ENCODE measurements at regions of chr17 and their contacts with region 1.

Region 1: GRCh38 chr17:33750943-33751701 is 458.0 kb upstream of the ASIC2 start:
- DNase-seq: peak; percentile 65 to 82 (median 77)
- H3K4me3 ChIP-seq: peak overlapping the region in 4 of 7 experiments; percentile 16 to 57 (median 26)
- H3K27ac ChIP-seq: no peak overlapping the region
- H3K4me1 ChIP-seq: no peaks in the 10 kb centered on the region
- H3K27me3 ChIP-seq: peaks cover 5 to 26% (median 9%) of the 10 kb centered on the region in 5 experiments

Region 2: GRCh38 chr17:33725675-33726271 is 25.3 kb before region 1 on chr17:
- CTCF ChIA-PET with region 1: interaction called, 31 read pairs
- POLR2A ChIA-PET with region 1: no interaction called
- DNase-seq: peak; percentile 23 to 50 (median 39)
- H3K4me3 ChIP-seq: no peak overlapping the region
- H3K27ac ChIP-seq: no peak overlapping the region
- H3K4me1 ChIP-seq: no peaks in the 10 kb centered on the region
- H3K27me3 ChIP-seq: peaks cover 0 to 27% (median 3%) of the 10 kb centered on the region in 5 experiments

Region 3: DNA sequence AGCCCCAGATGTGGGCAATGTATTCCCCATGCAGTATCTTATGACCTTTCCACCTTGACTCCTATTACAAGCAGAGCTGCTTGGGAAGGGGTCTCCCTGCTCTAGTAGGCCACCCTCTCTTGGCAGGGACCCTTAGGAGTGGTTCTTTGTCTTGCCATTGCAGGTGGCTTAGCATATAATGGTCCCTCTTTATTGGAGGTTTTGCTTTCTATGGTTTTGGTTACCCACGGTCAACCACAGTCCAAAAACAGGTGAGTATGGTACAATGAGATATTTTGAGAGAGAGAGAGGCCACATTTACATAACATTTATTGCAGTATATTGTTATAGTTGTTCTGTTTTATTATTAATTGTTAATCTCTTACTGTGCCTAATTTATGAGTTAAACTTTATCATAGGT is 14.7 kb after region 1 on chr17:
- CTCF ChIA-PET with region 1: no interaction called
- POLR2A ChIA-PET with region 1: no interaction called
- DNase-seq: no peak
- H3K4me3 ChIP-seq: no peak overlapping the region
- H3K27ac ChIP-seq: no peak overlapping the region
- H3K4me1 ChIP-seq: no peaks in the 10 kb centered on the region
- H3K27me3 ChIP-seq: no peaks in the 10 kb centered on the region

Region 4: DNA sequence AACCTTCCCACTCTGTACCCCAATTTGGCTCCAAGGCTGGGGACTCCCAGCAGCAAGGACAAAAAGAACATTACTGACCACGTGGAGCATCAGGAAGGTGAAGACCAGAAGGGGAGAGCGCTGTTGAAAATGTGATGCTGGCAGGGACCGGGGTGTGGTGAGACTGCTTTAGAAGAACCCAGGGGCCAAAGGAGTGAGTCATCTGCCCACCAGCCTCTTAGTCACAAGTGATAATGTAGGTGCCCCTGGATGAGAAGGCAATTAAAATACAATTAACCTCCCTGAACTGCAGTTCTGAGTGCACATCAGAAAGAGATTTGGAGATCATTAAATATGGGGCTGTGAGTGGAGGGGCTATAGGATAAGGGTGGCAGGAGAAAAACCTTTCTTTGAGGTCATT is 137.3 kb after region 1 on chr17:
- CTCF ChIA-PET with region 1: no interaction called
- POLR2A ChIA-PET with region 1: no interaction called
- DNase-seq: peak in 2 of 3 donors; percentile 38 to 61
- H3K4me3 ChIP-seq: no peak overlapping the region
- H3K27ac ChIP-seq: peak overlapping the region in 1 of 2 experiments; percentile 18
- H3K4me1 ChIP-seq: peaks cover 0 to 4% (median 0%) of the 10 kb centered on the region in 4 experiments
- H3K27me3 ChIP-seq: peaks cover 0 to 8% (median 0%) of the 10 kb centered on the region in 5 experiments

Region 5: GRCh38 chr17:33944412-33944811 is 193.3 kb after region 1 on chr17:
- CTCF ChIA-PET with region 1: no interaction called
- POLR2A ChIA-PET with region 1: interaction called, 10 read pairs
- DNase-seq: no peak
- H3K4me3 ChIP-seq: no peak overlapping the region
- H3K27ac ChIP-seq: no peak overlapping the region
- H3K4me1 ChIP-seq: peaks cover 0 to 4% (median 0%) of the 10 kb centered on the region in 4 experiments
- H3K27me3 ChIP-seq: no peaks in the 10 kb centered on the region